Activated B cell treated with CpG ODN at 0.5 μM for 24 hours (primary cell): ENCODE measurements at regions of chr17 and their contacts with region 1.

Region 1: DNA sequence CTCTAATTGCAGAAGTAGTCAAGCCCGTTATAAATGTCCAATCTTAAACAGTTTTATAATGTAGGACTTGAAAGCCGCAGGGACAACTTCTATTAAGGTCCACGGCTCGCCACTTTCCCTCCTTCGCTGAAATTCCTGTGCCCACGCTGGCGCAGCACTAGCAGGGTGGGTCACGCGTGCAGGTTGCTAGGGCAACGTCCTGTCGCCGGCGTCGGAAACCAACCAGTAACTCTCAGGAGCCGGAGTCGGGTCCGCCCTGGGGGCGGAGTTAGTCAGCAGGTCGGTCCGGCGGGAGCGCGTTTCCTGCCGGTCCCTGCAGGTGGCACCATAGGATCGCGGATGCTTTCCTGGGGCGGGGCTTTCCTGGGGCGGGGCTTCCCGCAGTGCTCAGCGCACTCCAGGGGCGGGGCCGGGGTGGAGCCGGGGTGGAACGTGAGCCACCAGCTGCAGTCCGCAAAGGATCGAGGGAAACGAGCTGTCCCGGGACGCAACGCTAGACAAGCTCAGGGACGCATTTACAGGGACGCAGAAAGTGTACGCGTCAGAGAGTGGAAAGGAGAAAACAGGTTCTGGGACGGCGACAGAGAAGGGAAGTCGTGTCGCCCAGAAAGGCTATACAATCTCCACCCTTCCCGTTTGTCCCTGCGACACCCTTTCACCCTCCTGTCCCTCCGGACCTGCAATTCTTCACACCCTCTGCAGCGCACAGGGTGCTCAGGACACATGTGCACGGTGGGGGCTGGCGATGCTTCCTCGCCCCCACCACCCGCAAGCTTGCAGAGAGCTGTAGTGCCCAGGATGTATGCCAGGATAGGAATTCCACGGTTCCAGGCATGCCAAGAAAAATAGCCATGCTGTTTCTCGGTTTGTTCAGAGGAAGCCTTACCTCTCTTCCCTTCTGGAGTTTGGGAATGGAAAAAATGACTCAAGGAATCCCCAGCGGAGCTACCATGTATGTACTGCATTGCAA is 12.4 kb downstream of the COPZ2 start:
- DNase-seq: peak; percentile 91
- ATAC-seq: peak; percentile 89
- H3K4me3 Mint-ChIP-seq: peak overlapping the region; percentile 89
- H3K27ac Mint-ChIP-seq: peak overlapping the region; percentile 91
- H3K4me1 Mint-ChIP-seq: peaks cover 35% of the 10 kb centered on the region
- H3K27me3 Mint-ChIP-seq: peaks cover 9% of the 10 kb centered on the region
- CTCF ChIP-seq: no peak

Region 2: DNA sequence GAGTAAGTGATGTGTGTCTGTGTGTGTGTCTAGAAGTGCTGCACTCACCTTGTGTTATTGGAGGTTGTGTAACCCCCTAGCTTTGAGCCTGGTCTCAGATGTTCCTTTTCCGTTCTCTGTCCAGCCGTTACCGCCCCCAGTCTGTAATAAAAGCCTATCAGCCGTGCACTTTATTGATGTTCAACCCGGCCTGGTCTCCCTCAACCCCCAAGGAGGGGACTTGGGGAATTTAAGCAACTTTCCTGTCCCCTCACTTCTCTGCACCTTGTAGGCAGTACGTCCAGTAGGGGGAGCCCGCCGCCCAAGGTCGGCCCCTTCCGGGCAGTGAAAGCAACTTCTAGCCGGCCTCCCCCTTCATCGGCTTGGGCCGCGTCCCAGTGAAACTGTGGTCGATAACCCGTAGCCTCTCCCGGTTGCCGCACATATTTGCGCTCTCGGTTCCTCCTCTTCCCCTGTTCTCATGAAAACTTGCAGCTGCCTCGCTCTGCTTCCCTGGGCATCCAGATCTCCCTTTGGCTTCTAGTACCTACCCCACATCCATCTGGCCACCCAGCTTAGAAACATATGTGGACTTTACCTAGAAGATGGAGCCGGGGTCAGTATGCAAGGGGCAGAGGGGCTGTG is 76.0 kb before region 1 on chr17:
- CTCF ChIA-PET with region 1: no interaction called
- POLR2A ChIA-PET with region 1: interaction called, 3 read pairs
- intact Hi-C with region 1: loop called (anchors 2 kb)
- DNase-seq: peak; percentile 76
- ATAC-seq: peak; percentile 80
- H3K4me3 Mint-ChIP-seq: peak overlapping the region; percentile 72
- H3K27ac Mint-ChIP-seq: peak overlapping the region; percentile 62
- H3K4me1 Mint-ChIP-seq: peaks cover 33% of the 10 kb centered on the region
- H3K27me3 Mint-ChIP-seq: no peaks in the 10 kb centered on the region
- CTCF ChIP-seq: peak; percentile 78

Region 3: DNA sequence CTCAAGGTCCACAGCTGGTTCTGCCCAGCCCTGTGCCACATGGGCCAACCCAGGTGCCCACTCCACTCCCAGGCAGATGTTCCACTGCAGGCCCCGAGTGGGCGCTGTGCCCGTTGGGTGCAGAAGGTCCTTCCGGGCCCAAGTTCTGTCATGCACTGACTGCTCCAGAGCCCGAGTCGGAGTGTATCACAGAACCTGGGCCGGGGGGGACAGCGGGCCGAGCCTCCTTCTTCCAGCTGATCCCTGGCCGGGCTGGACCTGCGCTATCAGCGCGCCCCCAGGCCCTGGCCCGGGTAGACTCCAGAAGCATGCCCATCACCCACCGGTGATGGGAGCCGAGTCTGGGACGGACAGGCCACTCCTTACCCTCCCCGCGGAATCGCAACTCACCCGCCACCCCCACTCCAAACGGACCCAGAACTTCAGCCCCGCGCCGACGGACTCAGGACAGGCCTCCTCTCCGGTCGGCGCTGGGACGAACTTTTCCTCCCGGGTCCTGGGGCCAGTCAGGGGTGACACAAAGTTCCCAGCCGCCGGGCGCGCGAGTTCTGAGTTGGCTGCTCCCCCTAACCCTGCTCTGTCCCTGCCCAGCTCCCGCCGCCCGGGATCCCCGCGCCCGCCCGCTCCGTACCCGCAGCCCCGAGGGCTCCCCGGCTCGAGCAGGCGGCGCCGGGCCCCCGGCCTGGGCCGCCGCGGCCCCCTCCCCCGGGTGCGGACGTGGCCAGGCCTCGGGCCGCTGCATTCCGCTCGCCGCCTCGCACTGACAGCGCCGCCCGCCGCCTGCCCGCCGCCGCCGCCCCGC is 12.0 kb after region 1 on chr17 and contains the start of gene COPZ2:
- CTCF ChIA-PET with region 1: interaction called, 20 read pairs
- POLR2A ChIA-PET with region 1: interaction called, 3 read pairs
- intact Hi-C with region 1: loop called (anchors 1 kb)
- DNase-seq: peak; percentile 53
- ATAC-seq: peak; percentile 93
- H3K4me3 Mint-ChIP-seq: peak within 1 kb of the TSS; percentile 86
- H3K27ac Mint-ChIP-seq: no peak within 1 kb of the TSS
- H3K4me1 Mint-ChIP-seq: peaks cover 14% of the 10 kb centered on the region
- H3K27me3 Mint-ChIP-seq: peaks cover 17% of the 10 kb centered on the region
- CTCF ChIP-seq: no peak
- total RNA-seq, gene COPZ2: 3.3 and 4.1 TPM in 2 replicates

Region 4: GRCh38 chr17:48084932-48085444 is 59.8 kb after region 1 on chr17:
- CTCF ChIA-PET with region 1: interaction called, 49 read pairs
- POLR2A ChIA-PET with region 1: interaction called, 4 read pairs
- intact Hi-C with region 1: no loop called
- DNase-seq: no peak
- ATAC-seq: no peak
- H3K4me3 Mint-ChIP-seq: no peak overlapping the region
- H3K27ac Mint-ChIP-seq: no peak overlapping the region
- H3K4me1 Mint-ChIP-seq: peaks cover 5% of the 10 kb centered on the region
- H3K27me3 Mint-ChIP-seq: no peaks in the 10 kb centered on the region
- CTCF ChIP-seq: no peak

Region 5: DNA sequence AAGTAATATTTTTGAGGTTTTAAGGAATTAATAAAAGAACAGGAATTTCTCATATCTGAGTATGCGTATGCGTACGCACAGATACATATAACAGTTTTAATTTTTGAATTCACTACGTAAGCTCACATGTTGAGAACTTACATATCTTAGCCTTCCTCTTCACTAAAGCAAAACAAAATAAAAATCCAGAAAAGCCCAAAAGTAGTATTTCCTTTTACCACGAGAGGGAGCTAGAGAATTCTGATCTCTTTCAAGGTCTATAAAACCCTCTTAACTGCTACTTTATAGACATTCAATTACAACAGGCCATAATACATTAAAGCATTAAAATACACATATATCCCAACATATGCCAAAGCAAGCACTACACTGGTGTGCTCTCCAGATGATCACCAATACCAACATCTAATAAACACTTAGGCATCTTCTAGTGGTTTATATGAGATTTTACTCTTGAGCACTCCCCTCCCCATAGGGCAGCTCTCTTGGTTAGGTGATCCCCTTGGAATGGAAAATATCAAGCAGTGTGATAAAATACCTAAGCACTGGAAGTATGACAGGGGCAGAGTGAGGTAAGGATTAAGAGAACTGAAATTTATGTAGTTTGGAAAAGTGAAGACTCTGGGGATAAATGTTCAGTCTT is 310.8 kb after region 1 on chr17:
- CTCF ChIA-PET with region 1: interaction called, 3 read pairs
- POLR2A ChIA-PET with region 1: no interaction called
- intact Hi-C with region 1: loop called (anchors 1 kb)
- DNase-seq: no peak
- ATAC-seq: peak; percentile 47
- H3K4me3 Mint-ChIP-seq: no peak overlapping the region
- H3K27ac Mint-ChIP-seq: no peak overlapping the region
- H3K4me1 Mint-ChIP-seq: no peaks in the 10 kb centered on the region
- H3K27me3 Mint-ChIP-seq: no peaks in the 10 kb centered on the region
- CTCF ChIP-seq: peak; percentile 60

Region 6: GRCh38 chr17:48357779-48358602 is 332.8 kb after region 1 on chr17:
- CTCF ChIA-PET with region 1: no interaction called
- POLR2A ChIA-PET with region 1: no interaction called
- intact Hi-C with region 1: no loop called
- DNase-seq: no peak
- ATAC-seq: peak; percentile 31
- H3K4me3 Mint-ChIP-seq: no peak overlapping the region
- H3K27ac Mint-ChIP-seq: no peak overlapping the region
- H3K4me1 Mint-ChIP-seq: peaks cover 16% of the 10 kb centered on the region
- H3K27me3 Mint-ChIP-seq: no peaks in the 10 kb centered on the region
- CTCF ChIP-seq: no peak

Region 7: DNA sequence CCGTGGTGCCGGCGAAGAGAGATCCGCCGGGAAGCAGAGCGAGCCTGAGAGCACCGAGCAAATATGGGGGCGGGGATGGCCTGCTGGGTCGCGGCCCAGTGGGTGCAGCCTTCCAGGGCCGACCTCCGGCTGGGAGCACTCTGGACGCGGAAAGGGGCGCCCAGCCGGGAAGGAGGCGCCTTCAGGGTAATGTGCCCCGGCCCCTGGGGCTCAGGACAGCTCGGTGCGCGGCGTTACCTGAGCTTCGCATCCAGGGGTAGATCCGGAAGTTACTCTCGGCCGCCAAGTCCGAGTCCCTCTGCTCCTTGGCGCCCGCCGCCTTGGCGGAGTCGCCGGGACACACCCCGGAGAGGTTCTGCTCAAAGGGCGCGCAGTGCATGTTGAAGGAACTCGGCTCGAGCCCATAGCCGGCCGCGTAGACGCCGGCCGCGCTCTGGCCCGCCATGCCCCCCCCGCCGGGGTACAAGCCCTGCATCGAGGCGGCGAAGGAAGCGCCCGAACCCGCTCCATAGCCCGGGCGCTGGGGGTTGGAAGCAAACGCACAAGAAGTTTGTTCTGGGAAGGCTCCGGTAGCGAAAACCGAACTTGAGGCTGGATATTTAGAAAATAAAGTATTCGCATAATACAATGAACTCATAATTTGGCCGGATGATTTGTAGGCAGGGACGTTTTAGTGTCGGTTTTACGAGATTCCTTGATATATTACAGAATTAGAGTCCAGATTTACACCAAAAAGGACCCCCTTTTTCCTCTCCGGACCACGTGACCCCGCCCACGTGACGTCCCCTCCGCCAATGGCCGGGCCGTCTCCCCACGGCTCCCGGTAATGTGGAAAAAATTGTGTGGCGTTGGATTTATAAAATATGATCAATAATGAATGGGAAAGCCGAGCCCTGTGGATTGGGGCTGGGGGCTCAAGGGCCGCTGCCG is 585.3 kb after region 1 on chr17 and contains the start of gene HOXB7:
- CTCF ChIA-PET with region 1: no interaction called
- POLR2A ChIA-PET with region 1: no interaction called
- intact Hi-C with region 1: loop called (anchors 1 kb)
- DNase-seq: peak; percentile 68
- ATAC-seq: peak; percentile 43
- H3K4me3 Mint-ChIP-seq: peak within 1 kb of the TSS; percentile 95
- H3K27ac Mint-ChIP-seq: peak within 1 kb of the TSS; percentile 59
- H3K4me1 Mint-ChIP-seq: peaks cover 37% of the 10 kb centered on the region
- H3K27me3 Mint-ChIP-seq: peaks cover 42% of the 10 kb centered on the region
- CTCF ChIP-seq: no peak
- total RNA-seq, gene HOXB7: 0.60 and 0.93 TPM in 2 replicates

Region 8: DNA sequence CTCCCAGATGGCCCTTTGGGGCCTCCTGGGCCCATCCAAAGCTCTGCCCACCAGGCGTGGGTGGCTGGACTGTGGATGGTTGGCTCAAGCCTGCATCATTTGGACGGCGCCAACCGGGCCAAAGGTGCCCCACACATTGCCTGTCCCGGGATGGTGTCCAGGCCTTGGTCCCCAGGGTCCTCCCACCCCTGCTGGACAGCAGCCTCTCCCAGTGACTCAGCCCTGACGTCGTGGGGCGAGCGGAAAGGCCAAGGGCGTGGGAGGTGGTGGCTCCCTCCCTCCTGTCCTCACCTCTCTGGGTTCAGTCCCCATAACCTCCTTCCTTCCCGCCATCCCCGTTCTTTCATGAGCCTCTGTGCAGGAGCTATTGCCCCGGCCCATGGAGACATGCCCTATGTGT is 1901.7 kb after region 1 on chr17:
- CTCF ChIA-PET with region 1: no interaction called
- POLR2A ChIA-PET with region 1: interaction called, 14 read pairs
- intact Hi-C with region 1: no loop called
- DNase-seq: no peak
- ATAC-seq: no peak
- H3K4me3 Mint-ChIP-seq: no peak overlapping the region
- H3K27ac Mint-ChIP-seq: no peak overlapping the region
- H3K4me1 Mint-ChIP-seq: no peaks in the 10 kb centered on the region
- H3K27me3 Mint-ChIP-seq: peaks cover 34% of the 10 kb centered on the region
- CTCF ChIP-seq: no peak